CD8-positive, alpha-beta T cell (primary cell): ENCODE measurements at regions of chr20 and their contacts with region 1.

Region 1: DNA sequence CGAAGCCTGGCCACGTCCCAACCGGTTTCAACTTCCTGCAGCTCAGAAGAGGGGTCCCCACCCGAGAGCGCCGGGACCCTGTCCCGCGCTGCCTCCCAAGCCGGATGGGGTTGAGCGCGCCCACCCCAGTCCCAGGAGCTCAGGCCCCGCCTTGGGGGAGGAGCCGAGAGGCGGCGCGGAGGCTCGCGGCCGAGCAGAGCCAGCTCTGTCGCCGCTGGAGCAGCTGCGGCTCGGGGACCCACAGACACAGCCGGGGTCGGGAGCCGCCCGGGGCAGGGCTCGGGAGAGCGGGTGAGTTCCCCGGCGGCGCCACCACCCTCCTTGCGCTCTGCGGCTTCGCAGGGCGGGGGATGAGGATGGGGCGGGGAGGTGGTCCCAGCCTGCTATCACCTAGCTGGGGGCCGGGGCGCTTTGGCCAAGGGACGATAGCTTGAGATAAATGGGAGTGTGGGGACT is at the start of gene PPP1R16B:
- DNase-seq: peak; percentile 73 to 92 (median 84)
- ATAC-seq: peak; percentile 70
- H3K4me3 ChIP-seq: peak within 1 kb of the TSS; percentile 72 to 97
- H3K4me3 Mint-ChIP-seq: peak within 1 kb of the TSS; percentile 87
- H3K27ac ChIP-seq: peak within 1 kb of the TSS; percentile 99
- H3K27ac Mint-ChIP-seq: peak within 1 kb of the TSS; percentile 93
- H3K4me1 ChIP-seq: peaks cover 47% of the 10 kb centered on the region
- H3K4me1 Mint-ChIP-seq: peaks cover 51% of the 10 kb centered on the region
- H3K27me3 ChIP-seq: no peaks in the 10 kb centered on the region
- H3K27me3 Mint-ChIP-seq: no peaks in the 10 kb centered on the region
- CTCF ChIP-seq: no peak
- total RNA-seq, gene PPP1R16B: 128 to 129 TPM

Region 2: GRCh38 chr20:38033310-38034107 is 772.0 kb before region 1 on chr20 and contains the starts of genes RPRD1B and TTI1:
- CTCF ChIA-PET with region 1: no interaction called
- POLR2A ChIA-PET with region 1: no interaction called
- intact Hi-C with region 1: loop called in 1 of 2 experiments (anchors 5 kb)
- DNase-seq: peak; percentile 77 to 95 (median 88)
- ATAC-seq: peak; percentile 86
- H3K4me3 ChIP-seq: peak within 1 kb of the TSS; percentile 84 to 94
- H3K4me3 Mint-ChIP-seq: peak within 1 kb of the TSS; percentile 98
- H3K27ac ChIP-seq: peak within 1 kb of the TSS; percentile 92 to 98
- H3K27ac Mint-ChIP-seq: peak within 1 kb of the TSS; percentile 98
- H3K4me1 ChIP-seq: peaks cover 51% of the 10 kb centered on the region
- H3K4me1 Mint-ChIP-seq: peaks cover 73% of the 10 kb centered on the region
- H3K27me3 ChIP-seq: no peaks in the 10 kb centered on the region
- H3K27me3 Mint-ChIP-seq: no peaks in the 10 kb centered on the region
- CTCF ChIP-seq: no peak
- total RNA-seq, gene RPRD1B: 73.3 to 79.4 TPM
- total RNA-seq, gene TTI1: 12.6 to 15.7 TPM

Region 3: DNA sequence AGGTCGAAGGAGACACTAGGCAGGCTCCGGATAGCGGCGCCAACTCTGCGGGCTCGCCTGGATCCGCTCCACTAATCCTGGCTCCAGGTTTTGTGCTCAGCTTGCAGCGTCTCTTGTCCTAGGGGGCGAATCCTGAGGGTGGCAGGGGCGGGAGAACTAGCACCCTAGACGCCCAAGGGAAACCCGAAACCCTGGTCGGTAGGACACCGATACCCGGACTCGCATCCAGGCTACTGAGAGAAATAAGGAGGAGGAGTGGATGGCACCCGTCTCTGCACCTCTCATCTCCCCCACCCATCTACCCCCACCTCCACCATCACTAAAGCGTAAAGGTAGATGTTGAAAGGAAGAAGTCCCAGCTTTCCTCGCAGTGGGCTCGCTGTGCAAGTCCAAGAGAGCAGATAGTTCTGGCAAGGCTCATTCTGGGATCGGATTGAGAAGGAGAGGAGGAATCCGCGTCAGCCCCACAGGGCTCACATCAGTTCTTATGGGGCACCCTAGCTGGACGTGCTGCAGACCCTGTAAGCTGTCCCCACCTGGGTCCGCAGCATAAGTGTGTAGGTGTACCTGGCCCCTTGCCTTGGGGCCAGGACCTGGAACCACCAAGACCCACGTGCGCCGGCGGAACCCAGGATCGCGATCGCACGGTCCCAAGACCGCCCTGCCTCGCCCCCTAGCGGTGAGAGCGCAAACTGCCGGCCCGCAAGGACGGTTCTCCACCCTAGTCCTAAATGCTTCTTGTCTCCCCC is 74.4 kb before region 1 on chr20:
- CTCF ChIA-PET with region 1: no interaction called
- POLR2A ChIA-PET with region 1: interaction called, 3 read pairs
- intact Hi-C with region 1: loop called in 1 of 2 experiments (anchors 1 kb)
- DNase-seq: peak; percentile 60 to 86 (median 76)
- ATAC-seq: peak; percentile 75
- H3K4me3 ChIP-seq: peak overlapping the region; percentile 46 to 65
- H3K4me3 Mint-ChIP-seq: peak overlapping the region; percentile 73
- H3K27ac ChIP-seq: no peak overlapping the region
- H3K27ac Mint-ChIP-seq: no peak overlapping the region
- H3K4me1 ChIP-seq: peaks cover 34% of the 10 kb centered on the region
- H3K4me1 Mint-ChIP-seq: peaks cover 48% of the 10 kb centered on the region
- H3K27me3 ChIP-seq: peaks cover 60 to 79% of the 10 kb centered on the region in 2 experiments
- H3K27me3 Mint-ChIP-seq: peaks cover 90% of the 10 kb centered on the region
- CTCF ChIP-seq: peak; percentile 97

Region 4: GRCh38 chr20:38833857-38834164 is 28.3 kb after region 1 on chr20:
- CTCF ChIA-PET with region 1: interaction called, 4 read pairs
- POLR2A ChIA-PET with region 1: interaction called, 6 read pairs
- intact Hi-C with region 1: loop called in 1 of 2 experiments (anchors 2 kb)
- DNase-seq: peak in 4 of 9 experiments; percentile 51 to 81 (median 66)
- ATAC-seq: peak; percentile 72
- H3K4me3 ChIP-seq: no peak overlapping the region
- H3K4me3 Mint-ChIP-seq: peak overlapping the region; percentile 38
- H3K27ac ChIP-seq: peak overlapping the region in 1 of 2 experiments; percentile 41
- H3K27ac Mint-ChIP-seq: peak overlapping the region; percentile 64
- H3K4me1 ChIP-seq: peaks cover 17% of the 10 kb centered on the region
- H3K4me1 Mint-ChIP-seq: peaks cover 60% of the 10 kb centered on the region
- H3K27me3 ChIP-seq: no peaks in the 10 kb centered on the region
- H3K27me3 Mint-ChIP-seq: no peaks in the 10 kb centered on the region
- CTCF ChIP-seq: no peak

Region 5: DNA sequence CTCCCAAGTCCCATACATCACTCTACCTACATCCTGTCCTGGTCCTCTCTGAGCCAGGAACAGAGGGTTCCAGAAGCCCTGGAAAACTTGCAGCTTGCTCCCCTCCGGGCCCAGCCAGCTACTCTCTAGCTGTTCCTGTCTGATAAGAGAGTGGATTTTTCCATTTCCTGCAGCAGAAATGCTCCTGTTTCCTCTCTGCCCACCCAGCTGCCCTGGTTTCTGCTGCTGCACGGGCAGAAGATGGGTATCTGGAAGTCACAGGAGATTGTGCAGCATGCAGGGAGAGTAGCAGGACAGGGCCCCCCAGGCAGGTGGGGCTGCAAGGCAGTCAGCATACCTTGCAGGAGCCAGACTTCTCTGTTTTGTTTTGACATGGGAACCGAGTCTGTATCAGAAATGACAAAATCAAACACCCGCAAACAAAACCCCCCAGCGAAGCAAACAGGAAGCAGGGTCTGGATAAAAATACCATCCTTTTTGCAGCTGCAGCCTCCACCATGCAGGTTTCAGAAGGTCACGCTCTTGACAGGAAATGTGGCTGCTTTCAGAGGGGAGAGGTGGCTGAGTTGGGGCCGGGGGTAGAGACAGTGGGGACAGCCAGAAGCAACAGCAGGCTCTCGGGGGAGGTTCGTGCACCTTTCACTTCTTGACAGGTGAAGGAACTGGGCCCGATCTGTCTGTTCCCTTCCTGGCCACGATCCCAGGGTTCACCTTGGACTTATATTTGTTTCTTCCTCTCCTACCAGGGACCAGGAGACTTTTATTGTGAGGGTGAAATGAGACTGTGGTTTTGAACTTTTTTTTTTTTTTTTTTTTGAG is 69.9 kb after region 1 on chr20:
- CTCF ChIA-PET with region 1: interaction called, 21 read pairs
- POLR2A ChIA-PET with region 1: interaction called, 44 read pairs
- intact Hi-C with region 1: loop called (anchors 1 kb)
- DNase-seq: peak; percentile 53 to 93 (median 78)
- ATAC-seq: peak; percentile 51
- H3K4me3 ChIP-seq: peak overlapping the region; percentile 21 to 32
- H3K4me3 Mint-ChIP-seq: peak overlapping the region; percentile 82
- H3K27ac ChIP-seq: peak overlapping the region; percentile 61 to 87
- H3K27ac Mint-ChIP-seq: peak overlapping the region; percentile 98
- H3K4me1 ChIP-seq: peaks cover 59% of the 10 kb centered on the region
- H3K4me1 Mint-ChIP-seq: peaks cover 90% of the 10 kb centered on the region
- H3K27me3 ChIP-seq: no peaks in the 10 kb centered on the region
- H3K27me3 Mint-ChIP-seq: no peaks in the 10 kb centered on the region
- CTCF ChIP-seq: no peak

Region 6: DNA sequence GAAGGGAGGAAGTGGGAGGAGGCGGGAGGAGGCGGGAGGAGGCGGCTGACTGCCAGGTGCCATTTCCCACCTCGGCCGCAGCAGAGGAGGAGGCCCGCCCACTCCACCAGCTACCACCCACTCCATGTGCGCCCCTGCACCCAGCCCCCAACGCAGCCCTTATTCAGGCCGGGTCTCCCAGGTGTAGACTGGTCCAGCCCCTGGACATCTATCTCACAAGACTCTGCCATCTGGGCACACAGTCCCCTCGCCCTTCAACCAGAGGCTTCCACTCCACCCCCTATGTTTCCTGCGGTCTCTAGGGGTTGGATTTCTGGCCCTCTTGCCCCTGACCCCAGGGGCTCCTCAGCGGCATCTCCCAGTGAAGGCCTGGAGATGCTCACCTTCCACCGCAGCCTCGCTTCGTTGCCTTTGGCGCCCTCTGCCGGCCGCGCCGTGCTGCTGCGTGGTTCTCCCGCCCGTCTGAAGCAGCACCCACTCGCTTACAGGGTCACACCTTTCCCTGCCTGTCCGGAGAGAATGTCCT is 88.1 kb after region 1 on chr20:
- CTCF ChIA-PET with region 1: interaction called, 63 read pairs
- POLR2A ChIA-PET with region 1: interaction called, 26 read pairs
- intact Hi-C with region 1: loop called (anchors 1 kb)
- DNase-seq: peak; percentile 72 to 91 (median 81)
- ATAC-seq: peak; percentile 80
- H3K4me3 ChIP-seq: peak overlapping the region in 1 of 2 experiments; percentile 22
- H3K4me3 Mint-ChIP-seq: peak overlapping the region; percentile 69
- H3K27ac ChIP-seq: peak overlapping the region; percentile 29 to 82
- H3K27ac Mint-ChIP-seq: peak overlapping the region; percentile 91
- H3K4me1 ChIP-seq: peaks cover 10% of the 10 kb centered on the region
- H3K4me1 Mint-ChIP-seq: peaks cover 31% of the 10 kb centered on the region
- H3K27me3 ChIP-seq: no peaks in the 10 kb centered on the region
- H3K27me3 Mint-ChIP-seq: no peaks in the 10 kb centered on the region
- CTCF ChIP-seq: peak; percentile 85

Region 7: GRCh38 chr20:38962044-38962927 is 156.8 kb after region 1 on chr20 and contains the start of gene DHX35:
- CTCF ChIA-PET with region 1: no interaction called
- POLR2A ChIA-PET with region 1: interaction called, 7 read pairs
- intact Hi-C with region 1: loop called in 1 of 2 experiments (anchors 1 kb)
- DNase-seq: peak; percentile 96 to 100 (median 98)
- ATAC-seq: peak; percentile 99
- H3K4me3 ChIP-seq: peak within 1 kb of the TSS; percentile 83 to 97
- H3K4me3 Mint-ChIP-seq: peak within 1 kb of the TSS; percentile 94
- H3K27ac ChIP-seq: peak within 1 kb of the TSS; percentile 76 to 82
- H3K27ac Mint-ChIP-seq: peak within 1 kb of the TSS; percentile 97
- H3K4me1 ChIP-seq: peaks cover 19% of the 10 kb centered on the region
- H3K4me1 Mint-ChIP-seq: peaks cover 28% of the 10 kb centered on the region
- H3K27me3 ChIP-seq: no peaks in the 10 kb centered on the region
- H3K27me3 Mint-ChIP-seq: no peaks in the 10 kb centered on the region
- CTCF ChIP-seq: no peak
- total RNA-seq, gene DHX35: 8.5 to 8.8 TPM